ENCODE measurements at regions of chr15 and their contacts with region 1.

Region 1: GRCh38 chr15:66841953-66842681 is 140.1 kb downstream of the SMAD6 start:
- DNase-seq: peak; percentile 91
- ATAC-seq: peak; percentile 89

Region 2: GRCh38 chr15:66411190-66411589 is 430.9 kb before region 1 on chr15:
- intact Hi-C with region 1: no loop called
- DNase-seq: no peak
- ATAC-seq: no peak

Region 3: DNA sequence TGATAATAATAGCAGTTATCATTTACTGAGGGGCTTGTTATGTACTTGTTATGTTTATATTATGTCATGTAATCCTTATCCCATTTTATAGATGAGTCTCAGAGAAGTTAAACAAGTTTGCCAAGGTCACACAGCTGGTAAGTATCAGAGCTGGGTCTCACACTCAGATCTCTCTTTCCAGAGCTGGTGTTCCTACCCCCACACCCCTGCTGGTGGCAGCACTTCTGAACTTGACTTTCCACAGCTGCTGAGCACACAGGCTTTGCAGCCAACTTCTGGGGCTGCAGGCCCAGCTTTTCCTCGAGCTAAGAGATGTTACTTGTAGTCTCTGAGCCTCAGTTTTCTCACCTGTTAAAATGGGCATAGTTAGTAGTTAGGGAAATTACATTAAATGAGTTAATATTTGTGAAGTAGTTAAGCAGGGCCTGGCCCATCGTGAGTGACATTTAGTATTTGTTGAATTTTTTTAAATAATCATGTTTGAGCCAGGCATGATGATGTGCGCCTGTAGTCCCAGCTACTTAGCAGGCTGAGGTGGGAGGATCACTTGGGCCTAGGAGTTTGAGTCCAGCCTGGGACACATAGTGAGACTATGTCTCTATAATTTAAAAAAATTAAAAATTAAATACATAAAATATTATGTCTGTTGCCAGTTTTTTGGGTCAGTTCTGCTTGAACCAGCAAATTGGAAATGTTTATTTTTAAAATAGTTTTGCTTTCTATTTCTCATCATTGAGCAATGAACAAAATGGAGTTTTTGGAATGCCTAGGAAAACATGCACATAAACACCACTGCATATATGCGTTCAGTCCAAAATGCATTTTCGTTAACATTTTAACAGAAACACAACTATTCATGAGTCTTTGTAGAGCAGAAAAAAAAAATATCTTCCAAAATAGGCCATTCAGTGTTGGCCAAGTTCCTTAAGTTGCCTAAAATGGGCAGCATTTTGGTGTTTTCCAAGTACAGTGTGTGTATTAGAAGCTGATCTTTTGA is 52.8 kb before region 1 on chr15:
- intact Hi-C with region 1: loop called (anchors 10 kb)
- DNase-seq: peak; percentile 75
- ATAC-seq: peak; percentile 86

Measured in sciatic nerve (tissue), 2 donors.